ENCODE measurements at regions of chr9 and their contacts with region 1.

Region 1: GRCh38 chr9:97468658-97469448 is 32.6 kb upstream of the TMOD1 start:
- DNase-seq: peak; percentile 60 to 78 (median 69)
- H3K4me3 ChIP-seq: no peak overlapping the region
- H3K27ac ChIP-seq: no peak overlapping the region
- H3K4me1 ChIP-seq: no peaks in the 10 kb centered on the region
- H3K27me3 ChIP-seq: no peaks in the 10 kb centered on the region

Region 2: DNA sequence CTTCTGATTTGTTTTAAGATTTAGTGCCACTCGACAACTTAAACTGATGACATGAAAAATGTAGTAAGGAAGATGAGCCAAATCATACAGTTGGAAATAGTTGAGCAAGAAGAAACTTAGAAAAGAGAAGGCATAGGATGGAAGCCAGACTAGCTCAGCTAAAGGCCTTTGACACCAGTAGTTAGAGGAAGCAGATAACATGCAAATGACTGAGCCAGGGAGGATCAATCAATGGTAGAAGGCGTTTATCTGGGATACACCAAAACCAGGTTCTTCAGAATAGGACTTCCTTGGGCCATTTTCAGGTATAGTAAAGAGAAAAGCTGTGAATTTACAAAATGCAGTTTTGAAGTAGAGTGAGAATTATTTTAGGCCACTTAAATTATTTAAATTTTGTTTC is 53.7 kb before region 1 on chr9:
- CTCF ChIA-PET with region 1: interaction called, 12 read pairs
- POLR2A ChIA-PET with region 1: no interaction called
- DNase-seq: no peak
- H3K4me3 ChIP-seq: no peak overlapping the region
- H3K27ac ChIP-seq: no peak overlapping the region
- H3K4me1 ChIP-seq: peaks cover 6 to 17% (median 12%) of the 10 kb centered on the region in 4 experiments
- H3K27me3 ChIP-seq: no peaks in the 10 kb centered on the region

Region 3: GRCh38 chr9:97487107-97487506 is 18.3 kb after region 1 on chr9:
- CTCF ChIA-PET with region 1: interaction called, 39 read pairs
- POLR2A ChIA-PET with region 1: no interaction called
- DNase-seq: peak in 1 of 3 donors; percentile 19
- H3K4me3 ChIP-seq: no peak overlapping the region
- H3K27ac ChIP-seq: no peak overlapping the region
- H3K4me1 ChIP-seq: no peaks in the 10 kb centered on the region
- H3K27me3 ChIP-seq: no peaks in the 10 kb centered on the region

Region 4: DNA sequence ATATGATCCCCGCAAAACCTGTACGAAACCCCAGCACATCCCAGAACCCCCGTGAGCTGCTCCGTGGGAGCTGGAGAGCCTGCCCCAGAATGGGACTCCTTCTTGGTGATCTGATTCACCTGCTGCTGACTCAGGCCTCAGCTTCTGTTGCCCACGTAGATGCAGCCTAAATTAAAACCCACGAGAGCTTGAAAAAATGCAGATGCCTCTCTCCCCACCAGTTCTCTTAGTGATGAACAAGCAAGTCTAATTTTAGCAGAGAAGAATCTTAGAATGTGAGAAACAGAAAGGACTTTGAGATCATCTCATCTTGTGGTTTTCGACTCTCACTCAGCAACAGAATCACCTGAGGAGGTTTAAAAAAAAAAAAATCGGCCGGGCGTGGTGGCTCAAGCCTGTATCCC is 90.3 kb after region 1 on chr9:
- CTCF ChIA-PET with region 1: interaction called, 13 read pairs
- POLR2A ChIA-PET with region 1: no interaction called
- DNase-seq: peak in 2 of 3 donors; percentile 26 to 36
- H3K4me3 ChIP-seq: no peak overlapping the region
- H3K27ac ChIP-seq: no peak overlapping the region
- H3K4me1 ChIP-seq: peaks cover 0 to 27% (median 17%) of the 10 kb centered on the region in 4 experiments
- H3K27me3 ChIP-seq: no peaks in the 10 kb centered on the region

Region 5: GRCh38 chr9:97567182-97567893 is 98.5 kb after region 1 on chr9:
- CTCF ChIA-PET with region 1: interaction called, 18 read pairs
- POLR2A ChIA-PET with region 1: no interaction called
- DNase-seq: peak in 1 of 3 donors; percentile 4
- H3K4me3 ChIP-seq: no peak overlapping the region
- H3K27ac ChIP-seq: no peak overlapping the region
- H3K4me1 ChIP-seq: peaks cover 0 to 13% (median 4%) of the 10 kb centered on the region in 4 experiments
- H3K27me3 ChIP-seq: no peaks in the 10 kb centered on the region

Region 6: GRCh38 chr9:97598461-97599288 is 129.8 kb after region 1 on chr9:
- CTCF ChIA-PET with region 1: interaction called, 637 read pairs
- POLR2A ChIA-PET with region 1: interaction called, 5 read pairs
- DNase-seq: peak; percentile 83 to 92 (median 87)
- H3K4me3 ChIP-seq: peak overlapping the region in 1 of 7 experiments; percentile 32
- H3K27ac ChIP-seq: no peak overlapping the region
- H3K4me1 ChIP-seq: peaks cover 0 to 7% (median 2%) of the 10 kb centered on the region in 4 experiments
- H3K27me3 ChIP-seq: no peaks in the 10 kb centered on the region

Region 7: GRCh38 chr9:97628668-97629067 is 159.8 kb after region 1 on chr9:
- CTCF ChIA-PET with region 1: interaction called, 18 read pairs
- POLR2A ChIA-PET with region 1: no interaction called
- DNase-seq: no peak
- H3K4me3 ChIP-seq: no peak overlapping the region
- H3K27ac ChIP-seq: no peak overlapping the region
- H3K4me1 ChIP-seq: peaks cover 8 to 15% (median 11%) of the 10 kb centered on the region in 4 experiments
- H3K27me3 ChIP-seq: no peaks in the 10 kb centered on the region

Measured in common myeloid progenitor, CD34-positive (primary cell).